Activated T-helper 1 cell treated with anti-CD3 and anti-CD28 coated beads, Interleukin-12 subunit alpha, Interleukin-12 subunit beta, Interleukin-2, Interleukin-4 antibody, amounts not matched to agents 30 ng/mL and 10 ng/mL and 1 ng/mL, durations not matched to agents 14 hours and 24 hours and 36 hours (primary cell): ENCODE measurements at regions of chr11 and their contacts with region 1.

Region 1: GRCh38 chr11:86592659-86593451 is 79.6 kb downstream of the ME3 start:
- DNase-seq: peak; percentile 81
- H3K4me3 Mint-ChIP-seq: peak overlapping the region; percentile 63
- H3K27ac Mint-ChIP-seq: peak overlapping the region; percentile 93
- H3K4me1 Mint-ChIP-seq: peaks cover 61% of the 10 kb centered on the region
- H3K27me3 Mint-ChIP-seq: no peaks in the 10 kb centered on the region

Region 2: GRCh38 chr11:85826116-85826855 is 766.6 kb before region 1 on chr11:
- intact Hi-C with region 1: loop called (anchors 5 kb)
- DNase-seq: no peak
- H3K4me3 Mint-ChIP-seq: peak overlapping the region; percentile 1
- H3K27ac Mint-ChIP-seq: peak overlapping the region; percentile 87
- H3K4me1 Mint-ChIP-seq: peaks cover 74% of the 10 kb centered on the region
- H3K27me3 Mint-ChIP-seq: no peaks in the 10 kb centered on the region

Region 3: DNA sequence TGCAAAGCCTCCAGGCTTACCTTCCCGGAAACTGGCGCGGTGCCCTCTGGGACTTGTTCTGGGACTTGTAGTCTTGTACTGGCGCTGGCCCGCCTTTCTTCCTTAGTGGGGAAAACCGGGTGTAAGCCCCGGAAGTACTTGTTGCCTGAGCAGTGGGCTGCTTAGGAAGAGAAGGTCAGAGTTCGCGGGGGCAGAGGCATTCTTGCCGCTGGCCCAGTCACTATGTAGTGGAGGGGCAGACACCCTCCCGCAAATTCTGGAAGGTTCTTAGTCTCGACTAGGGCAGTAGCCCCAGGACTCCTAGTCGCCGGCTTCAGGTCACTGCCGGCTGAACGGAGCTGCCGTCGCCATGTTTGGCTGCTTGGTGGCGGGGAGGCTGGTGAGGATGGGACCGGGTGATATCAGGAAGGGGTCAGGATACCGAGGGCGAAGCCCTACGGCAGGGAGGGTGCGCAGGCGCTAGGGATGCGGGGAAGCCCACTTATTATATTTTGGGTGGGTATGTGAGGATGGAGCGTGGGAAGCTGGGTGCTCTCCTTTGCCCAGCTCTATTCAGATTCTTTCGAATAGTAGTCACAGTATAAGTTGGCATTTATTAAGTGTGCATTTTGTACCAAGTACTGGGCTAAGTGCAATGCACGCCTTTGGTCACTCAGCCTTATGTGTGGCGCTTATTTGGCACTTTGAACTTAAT is 290.6 kb before region 1 on chr11 and contains the start of gene HIKESHI:
- intact Hi-C with region 1: loop called (anchors 2 kb)
- DNase-seq: peak; percentile 83
- H3K4me3 Mint-ChIP-seq: peak within 1 kb of the TSS; percentile 100
- H3K27ac Mint-ChIP-seq: peak within 1 kb of the TSS; percentile 97
- H3K4me1 Mint-ChIP-seq: peaks cover 28% of the 10 kb centered on the region
- H3K27me3 Mint-ChIP-seq: no peaks in the 10 kb centered on the region
- total RNA-seq, gene HIKESHI: 54.2 and 56.4 TPM in 2 replicates

Region 4: GRCh38 chr11:86456052-86456939 is 136.6 kb before region 1 on chr11:
- intact Hi-C with region 1: loop called (anchors 1 kb)
- DNase-seq: peak; percentile 71
- H3K4me3 Mint-ChIP-seq: no peak overlapping the region
- H3K27ac Mint-ChIP-seq: peak overlapping the region; percentile 40
- H3K4me1 Mint-ChIP-seq: peaks cover 75% of the 10 kb centered on the region
- H3K27me3 Mint-ChIP-seq: no peaks in the 10 kb centered on the region

Region 5: DNA sequence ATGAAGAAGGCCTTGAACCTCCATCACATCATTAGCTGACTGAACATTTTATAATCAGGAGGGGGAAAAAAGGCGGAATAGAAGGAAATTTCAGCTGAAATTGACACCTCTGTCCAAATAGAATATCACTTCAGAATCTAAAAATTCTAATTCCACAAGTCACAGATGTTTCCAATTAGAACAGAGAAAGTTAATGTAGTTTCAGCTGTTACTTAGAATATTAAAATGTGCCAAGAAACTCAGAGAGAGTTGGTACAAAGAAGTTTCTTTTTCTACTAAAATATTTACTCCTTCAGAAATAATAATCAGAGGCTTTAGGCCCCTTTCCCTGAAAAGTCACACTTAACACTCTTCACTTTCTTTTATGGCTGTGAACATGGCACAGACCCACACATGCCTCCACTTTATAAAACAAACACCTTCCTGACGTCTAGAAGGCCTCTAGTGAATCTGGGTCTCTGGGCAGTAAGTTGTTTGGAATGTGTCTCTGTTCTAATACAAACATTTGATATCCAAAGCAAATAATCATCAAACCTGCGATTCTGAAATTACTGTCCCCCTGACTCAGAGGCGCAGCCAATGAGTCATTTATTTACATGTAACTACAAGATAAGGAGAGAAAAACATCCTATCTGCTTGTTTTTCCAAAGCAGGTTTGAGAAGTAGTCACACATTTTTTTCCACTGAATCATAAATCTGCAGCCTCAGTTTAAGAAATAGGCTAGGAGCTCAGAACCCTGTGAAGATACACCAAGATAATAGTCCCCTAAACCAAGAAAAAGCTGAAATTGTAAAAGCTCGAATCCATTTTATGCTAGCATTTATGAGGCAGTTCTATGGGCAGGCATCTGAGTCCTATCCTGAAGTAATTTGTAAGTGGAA is 68.9 kb before region 1 on chr11:
- intact Hi-C with region 1: loop called (anchors 1 kb)
- DNase-seq: no peak
- H3K4me3 Mint-ChIP-seq: peak overlapping the region; percentile 56
- H3K27ac Mint-ChIP-seq: peak overlapping the region; percentile 90
- H3K4me1 Mint-ChIP-seq: peaks cover 36% of the 10 kb centered on the region
- H3K27me3 Mint-ChIP-seq: peaks cover 2% of the 10 kb centered on the region

Region 6: GRCh38 chr11:86637988-86638387 is 45.1 kb after region 1 on chr11:
- intact Hi-C with region 1: loop called (anchors 2 kb)
- DNase-seq: peak; percentile 40
- H3K4me3 Mint-ChIP-seq: no peak overlapping the region
- H3K27ac Mint-ChIP-seq: peak overlapping the region; percentile 33
- H3K4me1 Mint-ChIP-seq: peaks cover 51% of the 10 kb centered on the region
- H3K27me3 Mint-ChIP-seq: peaks cover 20% of the 10 kb centered on the region

Region 7: DNA sequence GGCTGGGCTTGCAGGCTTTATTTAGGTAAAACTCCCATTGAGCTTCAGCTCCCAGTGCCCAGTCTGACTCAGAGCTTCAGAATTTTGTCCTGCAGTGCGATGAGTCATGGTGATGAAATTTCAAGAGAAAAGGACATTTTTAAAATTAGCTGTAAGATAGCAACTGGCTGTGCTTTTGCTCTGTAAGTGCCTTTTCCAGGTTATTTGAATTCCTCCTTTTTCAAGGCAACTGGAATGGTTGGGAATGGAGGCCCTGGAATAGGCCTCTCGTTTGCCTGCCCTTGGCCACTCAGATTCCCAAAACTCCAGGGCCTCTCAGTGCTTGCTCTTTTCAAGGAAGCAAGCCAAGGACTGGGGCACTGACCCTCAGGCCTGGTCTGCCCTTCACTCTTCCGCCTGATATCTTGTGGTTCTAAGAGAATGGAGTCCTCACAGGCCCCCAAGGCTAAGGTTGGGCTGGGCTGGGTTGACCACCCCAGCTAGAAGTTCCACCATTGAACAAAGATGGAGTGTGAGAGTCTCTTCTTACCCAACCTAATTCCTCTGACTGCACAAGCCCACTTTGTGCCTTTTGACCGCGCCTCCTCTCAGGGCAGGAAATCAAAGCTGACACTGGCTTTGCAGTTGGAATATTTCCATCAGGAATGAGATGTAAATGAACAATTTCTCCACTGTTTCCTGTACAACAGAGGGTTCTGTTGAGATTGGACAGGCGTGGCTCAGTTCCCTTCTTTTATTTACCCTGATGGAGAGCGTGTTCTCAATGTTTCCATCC is 148.0 kb after region 1 on chr11:
- intact Hi-C with region 1: loop called (anchors 1 kb)
- DNase-seq: no peak
- H3K4me3 Mint-ChIP-seq: no peak overlapping the region
- H3K27ac Mint-ChIP-seq: no peak overlapping the region
- H3K4me1 Mint-ChIP-seq: peaks cover 41% of the 10 kb centered on the region
- H3K27me3 Mint-ChIP-seq: no peaks in the 10 kb centered on the region